AG04449 (cell line): ENCODE measurements at regions of chr6 and their contacts with region 1.

Region 1: GRCh38 chr6:132147530-132148011 is 196.4 kb upstream of the CCN2 start:
- DNase-seq: peak; percentile 99
- H3K4me3 ChIP-seq: no peak overlapping the region
- CTCF ChIP-seq: no peak

Region 2: DNA sequence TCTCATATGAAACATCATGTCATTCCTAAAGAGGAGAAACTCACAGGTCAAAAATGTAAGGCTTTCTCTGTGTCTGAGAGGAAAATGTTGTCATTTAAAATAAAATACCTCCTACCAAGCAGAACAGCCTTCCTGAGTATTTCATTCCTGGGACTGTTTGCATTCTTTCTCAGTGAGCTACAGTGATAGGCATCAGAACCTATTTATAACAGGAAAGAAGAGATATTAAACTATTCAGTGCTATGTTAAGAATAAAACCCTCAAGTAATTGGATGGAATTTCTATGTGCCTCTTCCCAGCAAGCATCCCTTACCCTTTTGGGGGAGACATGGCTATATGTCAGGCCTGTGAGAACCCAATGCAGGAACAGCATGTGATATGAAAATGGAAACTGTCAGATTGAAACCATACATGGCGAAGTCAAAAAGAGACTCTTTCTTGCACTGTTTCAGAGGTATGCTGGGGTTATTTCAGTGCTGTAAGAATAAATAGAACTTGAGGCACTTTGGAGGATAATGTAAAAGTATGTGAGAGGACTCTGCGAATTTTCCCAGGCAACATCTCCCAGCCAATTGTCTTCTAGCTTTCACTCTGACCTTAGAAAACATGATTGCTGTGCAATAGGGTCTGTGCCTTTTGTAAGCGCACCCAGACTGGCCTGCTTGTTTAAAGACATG is 62.6 kb before region 1 on chr6:
- CTCF ChIA-PET with region 1: no interaction called
- POLR2A ChIA-PET with region 1: interaction called, 11 read pairs
- DNase-seq: peak; percentile 99
- H3K4me3 ChIP-seq: peak overlapping the region; percentile 18; the same call in 1 of the 2 replicates
- CTCF ChIP-seq: no peak

Region 3: DNA sequence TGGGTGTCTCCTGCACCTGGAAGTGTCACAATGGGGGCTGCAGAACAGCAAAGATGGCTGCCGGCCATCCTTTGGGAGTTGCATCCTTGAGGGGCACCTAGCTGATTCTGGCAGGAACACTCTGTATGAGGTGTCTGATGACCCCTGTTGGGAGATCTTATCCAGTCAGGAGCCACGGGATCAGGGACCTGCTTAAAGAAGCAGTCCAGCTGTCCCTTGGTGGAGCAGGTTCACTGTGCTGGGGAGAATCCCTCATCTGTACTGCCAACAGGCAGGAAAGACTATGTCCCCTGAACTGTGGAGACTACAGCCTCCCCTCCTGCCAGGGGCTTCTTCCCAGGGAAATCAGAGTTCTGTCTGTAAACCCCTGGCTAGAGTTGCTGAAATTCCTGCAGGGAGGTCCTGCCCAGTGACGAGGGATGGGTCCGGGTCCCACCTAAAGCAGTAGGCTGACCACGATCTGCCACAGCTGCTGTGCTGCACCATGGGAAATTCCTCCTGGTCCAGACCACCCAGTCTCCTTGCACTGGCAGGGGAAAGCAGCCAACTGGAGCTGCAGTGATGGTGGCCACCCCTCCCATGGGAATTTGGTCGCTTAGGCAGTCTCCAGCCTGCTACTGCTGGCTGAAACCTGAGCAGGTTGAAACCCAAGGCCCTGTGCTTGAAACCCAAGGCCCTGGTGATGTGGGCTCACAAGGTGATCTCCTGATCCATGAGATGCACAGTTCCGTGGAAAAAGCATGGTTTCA is 277.4 kb after region 1 on chr6:
- CTCF ChIA-PET with region 1: no interaction called
- POLR2A ChIA-PET with region 1: no interaction called
- DNase-seq: no peak
- H3K4me3 ChIP-seq: no peak overlapping the region
- CTCF ChIP-seq: no peak